Activated T-helper 1 cell treated with anti-CD3 and anti-CD28 coated beads, Interleukin-12 subunit alpha, Interleukin-12 subunit beta, Interleukin-2, Interleukin-4 antibody, amounts not matched to agents 30 ng/mL and 10 ng/mL and 1 ng/mL, durations not matched to agents 14 hours and 24 hours and 36 hours (primary cell): ENCODE measurements at regions of chr5 and their contacts with region 1.

Region 1: DNA sequence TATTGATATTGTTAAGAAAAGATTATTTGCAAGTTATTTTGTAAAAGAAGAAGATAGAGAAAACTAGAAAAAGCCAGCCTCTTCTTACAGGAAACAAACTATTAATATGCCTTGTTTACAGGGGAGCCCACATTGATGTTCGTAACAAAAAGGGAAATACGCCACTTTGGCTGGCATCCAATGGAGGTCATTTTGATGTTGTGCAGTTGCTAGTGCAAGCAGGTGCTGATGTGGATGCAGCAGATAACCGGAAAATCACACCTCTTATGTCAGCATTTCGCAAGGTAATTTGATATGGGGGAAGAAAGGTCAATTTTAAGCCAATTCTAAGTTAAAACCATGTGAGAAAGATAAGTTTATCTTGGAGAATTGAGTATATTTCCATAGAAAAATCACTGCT is 37.6 kb upstream of the EIF4EBP3 start:
- DNase-seq: no peak
- H3K4me3 Mint-ChIP-seq: no peak overlapping the region
- H3K27ac Mint-ChIP-seq: no peak overlapping the region
- H3K4me1 Mint-ChIP-seq: no peaks in the 10 kb centered on the region
- H3K27me3 Mint-ChIP-seq: no peaks in the 10 kb centered on the region

Region 2: GRCh38 chr5:140524003-140524402 is 14.1 kb after region 1 on chr5:
- intact Hi-C with region 1: loop called (anchors 2 kb)
- DNase-seq: no peak
- H3K4me3 Mint-ChIP-seq: no peak overlapping the region
- H3K27ac Mint-ChIP-seq: no peak overlapping the region
- H3K4me1 Mint-ChIP-seq: no peaks in the 10 kb centered on the region
- H3K27me3 Mint-ChIP-seq: no peaks in the 10 kb centered on the region

Region 3: GRCh38 chr5:140557136-140557805 is 47.4 kb after region 1 on chr5 and contains the start of gene SRA1:
- intact Hi-C with region 1: no loop called
- DNase-seq: peak; percentile 90
- H3K4me3 Mint-ChIP-seq: peak within 1 kb of the TSS; percentile 88
- H3K27ac Mint-ChIP-seq: peak within 1 kb of the TSS; percentile 89
- H3K4me1 Mint-ChIP-seq: peaks cover 47% of the 10 kb centered on the region
- H3K27me3 Mint-ChIP-seq: no peaks in the 10 kb centered on the region
- total RNA-seq, gene SRA1: 55.6 and 59.2 TPM in 2 replicates